Testis (tissue), 5 donors: ENCODE measurements at regions of chr1 and their contacts with region 1.

Region 1: GRCh38 chr1:37434292-37434907 is 40.0 kb upstream of the ZC3H12A start:
- DNase-seq: peak; percentile 80
- H3K4me3 ChIP-seq: no peak overlapping the region
- H3K27ac ChIP-seq: no peak overlapping the region
- H3K4me1 ChIP-seq: no peaks in the 10 kb centered on the region
- H3K27me3 ChIP-seq: no peaks in the 10 kb centered on the region
- CTCF ChIP-seq: peak; percentile 76 to 84 (median 81)
- POLR2A ChIP-seq: no peak

Region 2: DNA sequence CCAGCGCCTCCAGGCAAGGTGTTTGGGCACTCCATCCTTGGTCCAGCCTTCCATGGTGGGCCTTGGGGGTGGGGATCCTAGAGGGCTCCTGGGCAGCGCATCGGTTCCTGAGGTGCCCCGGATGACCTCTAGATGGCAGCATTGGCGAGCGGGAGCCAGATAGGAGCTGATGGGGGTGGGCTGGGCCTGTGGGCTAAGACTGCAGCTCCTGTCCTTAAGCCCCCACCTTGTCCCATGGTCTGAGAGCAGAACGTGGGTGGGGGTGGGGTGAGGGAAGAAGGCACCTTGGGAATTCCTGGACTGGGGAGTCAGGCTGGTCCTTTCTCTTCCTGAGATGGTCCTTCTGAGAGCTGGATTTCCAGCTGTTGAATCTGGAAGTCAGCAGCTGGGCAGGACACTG is 858.3 kb before region 1 on chr1:
- intact Hi-C with region 1: loop called (anchors 10 kb)
- DNase-seq: peak; percentile 74
- H3K4me3 ChIP-seq: no peak overlapping the region
- H3K27ac ChIP-seq: no peak overlapping the region
- H3K4me1 ChIP-seq: no peaks in the 10 kb centered on the region
- H3K27me3 ChIP-seq: no peaks in the 10 kb centered on the region
- CTCF ChIP-seq: peak in 2 of 3 experiments; percentile 44 to 68
- POLR2A ChIP-seq: no peak